Dorsolateral prefrontal cortex (tissue), 120 donors: ENCODE measurements at regions of chr9 and their contacts with region 1.

Region 1: DNA sequence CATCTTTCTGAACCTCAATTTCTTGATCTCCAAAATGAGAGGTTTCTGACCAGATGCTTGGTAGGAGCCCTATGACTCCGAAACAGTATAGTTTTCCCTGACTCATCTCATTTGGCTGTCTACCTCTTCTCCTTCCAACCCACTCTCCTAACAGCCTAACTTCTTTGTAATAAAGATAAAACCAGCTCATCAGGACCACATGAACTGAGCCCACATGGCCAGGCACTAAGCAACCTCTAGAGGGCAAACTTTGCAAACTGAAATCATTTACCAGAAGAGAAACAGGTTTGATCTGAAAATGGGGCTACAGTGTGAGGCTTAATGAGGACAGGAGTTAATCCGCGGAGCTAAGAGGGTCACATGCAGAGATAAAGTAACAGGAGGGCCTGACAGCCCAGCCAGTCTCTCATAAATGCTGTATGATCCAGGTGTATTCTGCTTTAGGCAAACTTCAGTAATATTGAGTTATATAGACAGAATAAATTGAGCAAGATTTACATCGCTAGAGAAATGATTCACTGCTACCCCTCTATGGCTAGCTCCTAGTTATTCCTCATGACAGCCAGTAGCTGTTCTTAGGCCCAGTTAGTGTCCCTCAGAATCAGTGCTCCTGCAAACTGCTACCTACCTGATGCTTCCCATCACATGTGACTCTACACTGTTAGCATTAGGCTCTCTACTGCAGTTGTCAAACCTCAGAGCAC is 64.6 kb downstream of the ABCA1 start:
- DNase-seq: peak in 7 of 10 donors; percentile 28 to 68 (median 45)
- H3K4me3 ChIP-seq: peak overlapping the region in 2 of 59 donors; percentile 10 to 26
- H3K27ac ChIP-seq: peak overlapping the region in 12 of 59 donors; percentile 7 to 64 (median 35)
- H3K27me3 ChIP-seq: no peaks in the 10 kb centered on the region
- CTCF ChIP-seq: peak; percentile 66 to 91 (median 84)

Region 2: DNA sequence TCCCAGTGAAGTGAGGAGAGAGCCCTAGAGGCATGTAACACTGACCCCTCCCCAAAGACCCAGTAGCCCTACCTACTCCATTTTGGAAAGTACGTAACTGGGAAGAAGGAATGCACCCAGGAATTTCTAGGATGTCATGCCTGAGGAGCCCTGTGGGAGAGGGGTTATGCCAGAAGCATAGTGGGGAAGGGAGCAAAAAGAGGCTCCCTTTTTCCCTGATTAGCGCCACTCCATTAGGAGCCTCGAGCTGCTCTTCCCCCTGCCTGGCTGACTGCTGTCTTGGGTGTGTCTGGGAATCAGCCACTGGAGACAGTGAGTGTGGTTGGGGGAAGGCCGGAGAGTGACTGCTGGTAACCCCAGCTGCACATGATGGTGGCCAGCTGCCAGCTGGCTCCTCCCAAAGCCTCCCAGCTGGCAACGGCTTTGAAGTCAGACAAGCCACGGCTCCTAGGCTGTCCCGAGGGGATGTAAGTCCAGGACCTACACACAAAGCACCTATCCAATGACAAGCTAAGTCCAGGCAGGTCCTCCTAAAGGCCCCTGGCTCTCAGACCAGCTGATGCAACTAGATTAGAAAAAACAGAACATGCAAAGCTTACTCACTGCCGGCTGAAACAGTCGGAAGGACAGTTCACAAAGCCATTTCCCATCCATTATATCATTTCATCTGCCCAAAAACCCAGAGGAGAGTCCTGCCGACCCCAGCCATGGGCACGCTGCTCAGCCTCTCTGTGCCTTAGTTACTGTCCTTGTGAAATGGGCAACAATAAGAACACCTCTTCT is 201.2 kb after region 1 on chr9:
- intact Hi-C with region 1: loop called in 1 of 2 experiments (anchors 10 kb)
- DNase-seq: peak; percentile 33 to 86 (median 80)
- H3K4me3 ChIP-seq: peak overlapping the region in 42 of 59 donors; percentile 2 to 59 (median 26)
- H3K27ac ChIP-seq: peak overlapping the region in 33 of 59 donors; percentile 5 to 76 (median 41)
- H3K27me3 ChIP-seq: no peaks in the 10 kb centered on the region
- CTCF ChIP-seq: peak in 17 of 56 donors; percentile 7 to 43 (median 20)

Region 3: GRCh38 chr9:105414947-105415661 is 551.8 kb after region 1 on chr9:
- intact Hi-C with region 1: loop called (anchors 5 to 10 kb)
- DNase-seq: peak in 6 of 10 donors; percentile 35 to 67 (median 58)
- H3K4me3 ChIP-seq: peak overlapping the region in 4 of 59 donors; percentile 11 to 33 (median 24)
- H3K27ac ChIP-seq: peak overlapping the region in 44 of 59 donors; percentile 1 to 84 (median 57)
- H3K27me3 ChIP-seq: no peaks in the 10 kb centered on the region
- CTCF ChIP-seq: peak; percentile 77 to 97 (median 88)